ENCODE measurements at regions of chr19 and their contacts with region 1.

Region 1: DNA sequence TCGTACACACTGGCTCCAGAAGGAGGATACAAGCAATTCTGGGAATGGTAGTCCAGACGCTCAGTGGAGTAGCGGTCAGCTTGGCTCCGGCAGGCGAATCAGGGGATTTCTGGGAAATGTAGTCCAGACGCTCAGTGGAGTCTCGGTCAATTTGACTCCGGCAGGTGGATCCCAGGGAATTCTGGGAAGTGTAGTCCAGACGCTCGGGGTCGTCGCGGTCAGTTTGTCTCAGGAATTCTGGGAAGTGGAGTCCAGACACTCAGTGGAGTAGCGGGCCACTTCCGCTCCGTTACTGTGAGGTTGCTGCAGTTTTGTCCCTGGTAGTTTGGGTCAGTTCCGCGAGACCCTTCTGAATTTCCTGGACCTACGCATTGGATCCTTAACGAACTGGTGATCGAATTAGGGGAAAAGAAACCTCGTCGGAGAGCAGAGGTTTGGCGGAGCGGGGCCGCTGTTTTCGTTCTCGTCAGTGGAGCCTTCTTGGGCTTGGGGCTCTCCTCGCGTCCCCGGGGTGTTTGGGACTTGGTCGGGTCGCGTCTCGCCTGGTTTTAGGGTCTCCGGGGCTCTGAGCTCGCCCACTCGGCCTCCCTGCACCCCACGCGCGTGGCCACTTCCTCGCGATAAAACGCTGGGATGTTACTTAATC is at the start of gene ZNF225:
- DNase-seq: peak; percentile 92 to 97 (median 93)
- H3K4me3 ChIP-seq: peak within 1 kb of the TSS; percentile 77
- H3K27ac ChIP-seq: peak within 1 kb of the TSS in 1 of 2 donors; percentile 50
- H3K4me1 ChIP-seq: peaks cover 8% of the 10 kb centered on the region
- H3K27me3 ChIP-seq: no peaks in the 10 kb centered on the region
- CTCF ChIP-seq: peak in 2 of 3 donors; percentile 15 to 33
- EP300 ChIP-seq: peak; percentile 4
- POLR2A ChIP-seq: no peak
- total RNA-seq, gene ZNF225: 3.6 to 8.2 (median 6.9) TPM

Region 2: GRCh38 chr19:44002566-44003460 is 110.4 kb before region 1 on chr19 and contains the start of gene ZNF230:
- intact Hi-C with region 1: loop called in 1 of 4 experiments (anchors 10 kb)
- DNase-seq: peak; percentile 84 to 93 (median 88)
- H3K4me3 ChIP-seq: peak within 1 kb of the TSS; percentile 84
- H3K27ac ChIP-seq: no peak within 1 kb of the TSS
- H3K4me1 ChIP-seq: peaks cover 8% of the 10 kb centered on the region
- H3K27me3 ChIP-seq: no peaks in the 10 kb centered on the region
- CTCF ChIP-seq: no peak
- EP300 ChIP-seq: no peak
- POLR2A ChIP-seq: peak; percentile 37
- total RNA-seq, gene ZNF230: 2.6 to 11.2 (median 4.4) TPM

Region 3: DNA sequence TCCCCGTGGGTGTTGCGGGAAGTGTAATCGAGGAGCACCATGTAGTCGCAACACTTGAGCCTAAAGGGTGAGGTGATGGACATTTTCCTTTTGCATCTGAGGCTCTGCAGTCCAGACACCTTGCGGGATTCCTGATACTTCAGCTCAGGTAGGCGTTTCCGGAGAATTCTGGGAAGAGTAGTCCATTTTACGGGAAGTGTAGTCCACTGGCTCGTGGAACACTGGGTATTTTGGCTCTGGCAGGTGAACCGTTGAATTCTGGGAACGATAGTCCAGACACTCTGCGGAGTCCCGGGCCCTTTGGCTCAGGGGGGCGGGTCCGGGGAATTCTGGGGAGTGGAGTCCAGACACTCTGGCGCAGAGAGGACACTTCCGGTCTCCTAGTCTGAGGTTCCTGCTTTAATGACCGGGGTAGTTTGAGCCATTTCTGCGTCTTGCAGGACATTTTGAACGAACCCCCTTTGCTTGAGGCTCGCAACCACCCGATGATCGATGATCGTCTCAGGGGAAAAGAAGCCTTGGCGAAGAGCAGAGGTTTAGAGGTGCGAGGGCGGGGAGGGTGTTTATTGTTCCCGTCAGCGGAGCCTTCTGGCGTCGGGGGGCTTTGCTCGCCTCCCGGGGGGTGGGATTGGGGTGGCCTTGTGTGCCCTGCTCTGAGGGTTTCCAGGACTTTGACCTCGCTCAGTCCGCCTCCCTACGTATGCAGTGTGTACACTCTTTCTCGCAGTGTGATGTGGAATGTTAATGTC is 61.4 kb before region 1 on chr19 and contains the start of gene ZNF223:
- intact Hi-C with region 1: loop called in 1 of 4 experiments (anchors 10 kb)
- DNase-seq: peak; percentile 92 to 94 (median 93)
- H3K4me3 ChIP-seq: peak within 1 kb of the TSS; percentile 82
- H3K27ac ChIP-seq: peak within 1 kb of the TSS in 1 of 2 donors; percentile 31
- H3K4me1 ChIP-seq: peaks cover 5% of the 10 kb centered on the region
- H3K27me3 ChIP-seq: no peaks in the 10 kb centered on the region
- CTCF ChIP-seq: no peak
- EP300 ChIP-seq: peak; percentile 64
- POLR2A ChIP-seq: no peak
- total RNA-seq, gene ZNF223: 3.5 to 7.3 (median 4.7) TPM

Region 4: DNA sequence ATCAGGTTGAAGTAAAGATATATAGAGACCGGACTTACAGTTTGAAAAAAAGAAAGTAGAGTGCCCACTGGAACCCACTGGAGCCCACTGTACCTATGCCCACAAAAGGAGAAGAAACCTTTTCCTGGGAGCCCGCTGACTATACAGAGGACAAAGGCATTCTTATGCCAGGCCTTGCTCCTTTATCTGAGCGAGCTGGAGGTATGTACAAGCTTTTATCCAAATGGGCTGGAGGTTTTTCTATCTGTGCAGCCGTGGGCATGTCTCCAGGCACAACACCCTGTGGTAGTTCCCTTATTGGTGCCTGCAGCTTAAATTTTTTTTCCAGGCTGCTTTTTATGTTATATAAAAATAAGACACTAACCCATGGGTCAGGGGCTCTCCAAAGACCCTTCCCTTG is 36.5 kb after region 1 on chr19:
- intact Hi-C with region 1: no loop called
- DNase-seq: no peak
- H3K4me3 ChIP-seq: no peak overlapping the region
- H3K27ac ChIP-seq: no peak overlapping the region
- H3K4me1 ChIP-seq: no peaks in the 10 kb centered on the region
- H3K27me3 ChIP-seq: no peaks in the 10 kb centered on the region
- CTCF ChIP-seq: no peak
- EP300 ChIP-seq: no peak
- POLR2A ChIP-seq: no peak

Region 5: DNA sequence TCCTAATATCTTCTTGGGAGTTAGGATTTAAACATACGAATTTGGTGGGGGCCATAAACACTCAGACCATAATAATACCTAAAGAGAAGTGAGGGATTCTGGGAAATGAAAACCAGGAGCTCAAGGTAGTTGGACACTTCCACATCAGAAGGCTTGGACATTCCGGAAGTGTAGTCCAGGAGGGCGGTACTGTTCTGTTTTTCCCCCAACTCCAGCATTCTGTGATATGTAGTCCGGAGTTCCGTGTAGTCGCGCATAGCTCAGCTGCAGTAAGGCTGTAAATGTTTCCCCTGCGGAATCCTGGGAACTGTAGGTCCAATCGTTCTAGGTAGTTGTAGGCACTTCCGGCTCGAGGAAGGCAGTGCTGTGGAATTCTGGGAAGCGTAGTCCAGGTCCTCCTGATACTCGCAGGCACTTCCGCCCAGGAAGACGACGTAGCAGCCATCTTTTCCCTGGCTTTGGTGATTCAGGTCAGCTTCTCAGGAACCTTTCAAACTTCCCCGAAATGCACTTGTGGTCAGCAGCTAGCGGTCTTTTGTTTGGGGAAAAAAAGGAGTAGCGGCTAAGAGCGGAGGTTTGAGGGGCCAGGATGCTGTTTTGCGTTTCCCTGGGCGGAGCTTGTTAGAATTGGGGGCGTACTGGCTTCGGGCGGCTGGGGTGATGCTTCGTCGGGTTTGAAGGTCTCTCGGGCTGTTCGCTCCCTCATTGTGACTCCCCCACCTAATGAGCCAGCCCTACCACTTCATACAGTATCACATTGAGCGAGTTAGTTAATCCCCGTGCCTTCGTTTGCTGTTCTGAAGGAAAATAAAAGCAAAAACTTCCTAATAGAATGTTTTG is 51.6 kb after region 1 on chr19 and contains the start of gene ZNF226:
- intact Hi-C with region 1: loop called in 1 of 4 experiments (anchors 5 kb)
- DNase-seq: peak; percentile 82 to 88 (median 84)
- H3K4me3 ChIP-seq: peak within 1 kb of the TSS; percentile 68
- H3K27ac ChIP-seq: peak within 1 kb of the TSS; percentile 52 to 83
- H3K4me1 ChIP-seq: peaks cover 5% of the 10 kb centered on the region
- H3K27me3 ChIP-seq: no peaks in the 10 kb centered on the region
- CTCF ChIP-seq: peak in 1 of 3 donors; percentile 5
- EP300 ChIP-seq: no peak
- POLR2A ChIP-seq: peak; percentile 46
- total RNA-seq, gene ZNF226: 11.5 to 30.3 (median 22.4) TPM

Measured in ovary (tissue), 10 donors.